Natural killer cell (primary cell): ENCODE measurements at regions of chr12 and their contacts with region 1.

Region 1: DNA sequence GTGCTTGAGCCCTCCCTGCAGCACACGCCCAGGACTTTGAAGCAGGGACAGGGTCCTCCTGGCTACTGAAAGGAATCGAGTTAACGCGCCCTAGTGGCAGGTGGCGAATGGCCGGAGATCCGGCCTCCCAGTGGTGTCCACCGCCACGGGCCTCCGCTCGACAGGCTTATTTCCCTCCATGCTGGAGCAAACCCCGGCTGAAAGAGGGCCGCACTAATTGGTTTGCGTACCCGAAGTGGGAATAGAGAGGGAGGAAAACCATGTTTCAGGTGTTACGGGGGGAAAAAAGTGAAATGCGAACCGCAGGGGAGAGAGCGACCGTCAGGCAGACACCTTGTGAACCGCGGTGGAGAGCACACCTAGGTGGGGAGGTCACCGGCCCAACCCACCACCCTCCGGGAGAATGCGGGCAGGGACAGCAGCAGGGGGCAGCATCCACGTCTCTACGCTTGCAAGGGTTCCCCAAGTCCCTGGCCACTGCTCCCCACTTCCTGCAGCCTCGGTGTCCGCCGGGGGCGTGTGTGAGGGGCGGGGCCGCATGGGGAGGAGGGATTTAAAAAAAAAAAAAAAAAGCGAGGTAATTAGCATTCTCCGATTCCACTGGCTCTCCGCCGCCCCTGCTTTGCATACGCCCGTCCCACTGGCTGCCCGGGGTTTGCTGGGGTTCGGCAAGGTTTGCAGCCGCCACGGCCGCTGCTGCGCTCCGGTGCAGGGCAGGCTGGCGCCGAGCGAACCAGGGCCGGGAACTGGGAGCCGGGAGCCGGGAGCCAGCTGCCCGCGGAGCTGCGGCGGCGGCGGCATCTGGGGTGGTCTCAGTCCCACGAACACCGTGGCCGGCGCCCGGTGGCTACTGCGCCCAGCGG is 224.6 kb upstream of the CRY1 start:
- DNase-seq: peak; percentile 77 to 92
- ATAC-seq: peak; percentile 81 to 93 (median 81)
- H3K4me3 ChIP-seq: peak overlapping the region; percentile 35
- H3K4me3 Mint-ChIP-seq: peak overlapping the region; percentile 89
- H3K27ac ChIP-seq: no peak overlapping the region
- H3K27ac Mint-ChIP-seq: peak overlapping the region; percentile 76 to 81
- H3K4me1 ChIP-seq: peaks cover 43% of the 10 kb centered on the region
- H3K4me1 Mint-ChIP-seq: peaks cover 36 to 42% of the 10 kb centered on the region in 2 donors
- H3K27me3 ChIP-seq: peaks cover 6% of the 10 kb centered on the region
- H3K27me3 Mint-ChIP-seq: peaks cover 0 to 10% of the 10 kb centered on the region in 2 donors
- CTCF ChIP-seq: peak; percentile 19

Region 2: GRCh38 chr12:106955377-106956047 is 362.5 kb before region 1 on chr12 and contains the start of gene TMEM263:
- intact Hi-C with region 1: loop called (anchors 5 kb)
- DNase-seq: peak; percentile 90 to 97
- ATAC-seq: peak; percentile 81 to 94 (median 86)
- H3K4me3 ChIP-seq: peak within 1 kb of the TSS; percentile 88
- H3K4me3 Mint-ChIP-seq: peak within 1 kb of the TSS; percentile 98
- H3K27ac ChIP-seq: peak within 1 kb of the TSS; percentile 92
- H3K27ac Mint-ChIP-seq: peak within 1 kb of the TSS; percentile 89 to 98
- H3K4me1 ChIP-seq: peaks cover 18% of the 10 kb centered on the region
- H3K4me1 Mint-ChIP-seq: peaks cover 27 to 31% of the 10 kb centered on the region in 2 donors
- H3K27me3 ChIP-seq: no peaks in the 10 kb centered on the region
- H3K27me3 Mint-ChIP-seq: no peaks in the 10 kb centered on the region
- CTCF ChIP-seq: no peak
- total RNA-seq, gene TMEM263: 24.1 to 37.5 (median 34.4) TPM

Region 3: DNA sequence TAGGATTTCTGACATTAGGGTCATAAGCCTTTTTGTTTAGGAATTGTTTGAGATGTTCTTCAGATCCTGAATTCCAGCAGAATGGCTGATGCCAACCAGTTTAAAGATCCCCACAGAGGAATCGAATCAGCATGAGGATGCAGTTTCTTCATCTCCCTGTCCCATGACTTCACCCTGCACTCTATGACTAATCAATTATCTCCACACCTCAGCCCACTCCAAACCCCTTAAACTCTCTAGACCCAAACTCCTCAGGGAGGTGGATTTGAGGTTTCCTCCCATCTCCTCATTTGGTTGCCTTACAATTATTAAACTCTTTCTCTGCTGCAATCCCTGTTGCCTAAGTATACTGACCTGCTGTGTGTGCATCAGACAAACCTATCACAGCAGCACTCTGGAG is 138.1 kb before region 1 on chr12:
- intact Hi-C with region 1: loop called (anchors 2 kb)
- DNase-seq: no peak
- ATAC-seq: no peak
- H3K4me3 ChIP-seq: no peak overlapping the region
- H3K4me3 Mint-ChIP-seq: peak overlapping the region; percentile 2
- H3K27ac ChIP-seq: no peak overlapping the region
- H3K27ac Mint-ChIP-seq: peak overlapping the region; percentile 85 to 98
- H3K4me1 ChIP-seq: peaks cover 19% of the 10 kb centered on the region
- H3K4me1 Mint-ChIP-seq: peaks cover 23 to 32% of the 10 kb centered on the region in 2 donors
- H3K27me3 ChIP-seq: no peaks in the 10 kb centered on the region
- H3K27me3 Mint-ChIP-seq: peaks cover 0 to 2% of the 10 kb centered on the region in 2 donors
- CTCF ChIP-seq: no peak

Region 4: DNA sequence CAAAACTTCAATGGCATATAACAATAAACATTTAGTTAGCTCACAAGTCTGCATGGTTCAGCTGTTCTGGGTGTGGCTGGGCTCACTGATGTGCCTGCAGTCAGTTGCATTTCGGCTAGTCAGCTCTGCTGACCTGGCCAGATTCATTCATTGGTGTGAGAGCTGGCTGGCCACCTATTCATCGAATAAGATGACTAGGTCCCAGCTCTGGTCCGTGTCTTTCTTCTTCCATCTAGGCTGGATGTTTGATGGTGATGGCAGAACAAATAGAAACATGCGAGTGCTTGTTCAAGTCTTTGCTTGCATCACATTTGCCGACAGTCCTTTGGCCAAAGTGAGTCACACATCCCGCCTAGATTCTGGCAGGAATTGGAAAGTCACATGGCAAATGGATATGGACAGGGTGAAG is 21.3 kb before region 1 on chr12:
- intact Hi-C with region 1: no loop called
- DNase-seq: no peak
- ATAC-seq: no peak
- H3K4me3 ChIP-seq: no peak overlapping the region
- H3K4me3 Mint-ChIP-seq: no peak overlapping the region
- H3K27ac ChIP-seq: no peak overlapping the region
- H3K27ac Mint-ChIP-seq: no peak overlapping the region
- H3K4me1 ChIP-seq: no peaks in the 10 kb centered on the region
- H3K4me1 Mint-ChIP-seq: peaks cover 7% of the 10 kb centered on the region in 2 donors
- H3K27me3 ChIP-seq: no peaks in the 10 kb centered on the region
- H3K27me3 Mint-ChIP-seq: peaks cover 14 to 19% of the 10 kb centered on the region in 2 donors
- CTCF ChIP-seq: no peak

Region 5: DNA sequence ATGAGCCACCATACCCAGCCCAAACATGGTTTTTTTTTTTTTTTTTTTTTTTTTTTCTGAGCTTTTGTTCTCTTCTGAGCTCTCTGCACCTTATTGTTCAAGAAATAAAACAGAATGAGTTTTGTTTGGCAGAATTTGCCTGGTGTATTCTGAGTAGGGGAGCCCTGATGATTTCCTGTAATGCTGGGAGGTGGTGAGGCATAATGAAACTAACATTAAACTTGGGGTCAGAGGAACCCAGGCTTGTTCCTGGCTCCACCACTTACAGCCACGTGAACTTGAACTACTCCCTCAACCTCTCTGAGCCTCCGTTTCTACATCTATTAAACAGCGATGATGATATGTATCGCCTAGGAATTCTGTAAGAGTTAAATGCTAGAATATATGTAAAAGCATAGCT is 51.7 kb after region 1 on chr12:
- intact Hi-C with region 1: loop called (anchors 5 kb)
- DNase-seq: peak in 1 of 2 donors; percentile 65
- ATAC-seq: peak; percentile 49 to 68 (median 68)
- H3K4me3 ChIP-seq: no peak overlapping the region
- H3K4me3 Mint-ChIP-seq: peak overlapping the region; percentile 79
- H3K27ac ChIP-seq: no peak overlapping the region
- H3K27ac Mint-ChIP-seq: peak overlapping the region; percentile 81 to 90
- H3K4me1 ChIP-seq: peaks cover 47% of the 10 kb centered on the region
- H3K4me1 Mint-ChIP-seq: peaks cover 46 to 59% of the 10 kb centered on the region in 2 donors
- H3K27me3 ChIP-seq: peaks cover 3% of the 10 kb centered on the region
- H3K27me3 Mint-ChIP-seq: no peaks in the 10 kb centered on the region
- CTCF ChIP-seq: no peak

Region 6: DNA sequence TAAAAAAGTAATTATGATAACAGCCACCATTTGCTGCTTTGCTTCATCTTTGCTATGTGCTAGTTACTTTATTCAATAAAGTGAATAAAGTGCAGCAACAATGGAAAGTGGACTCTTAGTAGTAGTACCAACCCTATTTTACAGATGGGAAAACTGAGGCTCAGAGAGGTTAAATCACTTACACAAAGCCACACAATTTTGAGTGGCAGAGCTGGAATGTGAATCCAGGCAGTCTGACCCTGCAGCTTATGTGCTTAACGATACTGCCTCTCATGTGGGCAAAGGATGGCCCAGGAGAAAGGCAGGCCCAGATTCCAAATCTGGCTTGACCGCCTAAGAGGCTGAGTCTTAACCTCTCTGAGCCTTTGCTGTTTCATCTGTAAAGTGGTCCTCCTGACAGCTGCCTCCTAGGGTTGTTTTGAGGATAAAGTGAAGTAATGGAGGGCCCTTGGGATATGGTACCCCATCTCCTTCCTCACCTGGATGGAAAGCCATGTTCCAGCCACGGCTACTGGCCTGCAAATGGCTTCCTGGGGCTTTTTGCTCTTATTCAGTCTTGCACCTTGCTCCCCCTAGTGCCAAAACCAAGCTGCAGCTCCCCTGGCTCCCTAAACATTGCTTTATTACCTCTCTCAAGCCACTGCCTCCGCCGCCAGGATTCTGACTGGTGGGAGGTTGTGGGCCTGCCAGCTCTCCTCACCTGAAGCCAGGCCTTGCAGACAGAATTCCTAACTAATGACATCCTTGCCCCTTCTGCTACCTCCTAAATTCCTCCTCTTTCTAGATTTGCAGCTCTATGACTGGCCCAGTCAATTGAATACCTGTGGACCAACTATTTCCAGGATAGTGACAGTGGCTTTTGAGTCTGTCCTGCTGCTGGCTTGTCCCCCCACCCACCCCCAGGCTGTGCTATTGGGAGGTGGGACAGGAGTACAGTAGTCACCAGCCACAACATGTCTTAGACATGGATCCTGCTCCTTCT is 84.3 kb after region 1 on chr12:
- intact Hi-C with region 1: loop called (anchors 2 kb)
- DNase-seq: peak; percentile 40 to 78
- ATAC-seq: peak; percentile 61 to 86 (median 82)
- H3K4me3 ChIP-seq: no peak overlapping the region
- H3K4me3 Mint-ChIP-seq: no peak overlapping the region
- H3K27ac ChIP-seq: no peak overlapping the region
- H3K27ac Mint-ChIP-seq: no peak overlapping the region
- H3K4me1 ChIP-seq: peaks cover 4% of the 10 kb centered on the region
- H3K4me1 Mint-ChIP-seq: peaks cover 7 to 14% of the 10 kb centered on the region in 2 donors
- H3K27me3 ChIP-seq: no peaks in the 10 kb centered on the region
- H3K27me3 Mint-ChIP-seq: no peaks in the 10 kb centered on the region
- CTCF ChIP-seq: peak; percentile 73